Activated naive CD4-positive, alpha-beta T cell treated with anti-CD3 and anti-CD28 coated beads for 36 hours (primary cell): ENCODE measurements at regions of chr2 and their contacts with region 1.

Region 1: DNA sequence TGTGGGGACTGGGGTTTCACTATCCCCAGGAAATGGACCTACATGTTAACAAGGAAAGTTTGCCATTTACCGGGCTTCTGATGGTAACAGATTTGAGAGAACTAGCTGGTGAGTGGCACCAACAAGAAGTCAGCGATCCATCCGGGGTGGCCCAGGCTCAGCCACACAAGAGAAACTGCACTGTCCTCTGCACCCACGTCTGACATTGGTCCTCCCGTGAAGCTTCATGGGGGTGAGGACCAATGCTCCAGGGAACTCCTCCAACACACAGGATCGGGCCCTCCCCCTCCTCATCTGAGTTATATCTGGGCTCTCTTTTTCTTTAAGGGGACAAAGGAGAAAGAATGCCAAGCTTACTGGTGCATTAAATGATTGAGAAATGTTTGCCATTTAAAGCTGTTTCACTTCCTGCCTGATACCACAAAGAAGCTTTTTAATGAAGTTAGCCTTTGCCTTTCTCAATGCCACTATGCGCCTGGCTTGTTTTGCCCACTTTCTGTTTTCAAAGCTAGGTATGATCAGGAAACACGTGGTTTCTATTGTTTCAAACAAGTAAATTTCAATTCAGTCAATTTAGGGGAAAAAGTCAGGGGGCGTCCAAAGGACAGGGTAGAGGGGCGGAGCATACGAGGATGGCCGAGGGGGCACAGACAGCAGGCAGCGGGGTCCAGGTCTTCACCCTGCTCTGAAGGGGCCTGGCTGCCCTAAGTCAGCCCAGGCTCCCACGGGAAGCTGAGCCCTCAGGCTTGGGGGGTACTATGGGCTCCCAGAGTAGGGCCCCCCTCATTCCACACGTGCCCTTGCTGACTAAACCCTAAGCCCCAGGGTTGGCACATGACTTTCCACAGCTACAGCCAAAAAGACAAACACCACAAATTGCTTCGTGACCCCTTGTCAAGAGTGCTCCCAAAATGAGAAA is 204.0 kb upstream of the ID2 start:
- DNase-seq: peak; percentile 54
- H3K4me3 Mint-ChIP-seq: no peak overlapping the region
- H3K27ac Mint-ChIP-seq: peak overlapping the region; percentile 31
- H3K4me1 Mint-ChIP-seq: peaks cover 65% of the 10 kb centered on the region
- H3K27me3 Mint-ChIP-seq: no peaks in the 10 kb centered on the region

Region 2: GRCh38 chr2:8154936-8155335 is 322.9 kb before region 1 on chr2:
- CTCF ChIA-PET with region 1: no interaction called
- intact Hi-C with region 1: loop called (anchors 1 kb)
- DNase-seq: peak; percentile 68
- H3K4me3 Mint-ChIP-seq: no peak overlapping the region
- H3K27ac Mint-ChIP-seq: peak overlapping the region; percentile 78
- H3K4me1 Mint-ChIP-seq: peaks cover 16% of the 10 kb centered on the region
- H3K27me3 Mint-ChIP-seq: no peaks in the 10 kb centered on the region

Region 3: GRCh38 chr2:8303322-8303832 is 174.4 kb before region 1 on chr2:
- CTCF ChIA-PET with region 1: no interaction called
- intact Hi-C with region 1: loop called (anchors 5 kb)
- DNase-seq: peak; percentile 69
- H3K4me3 Mint-ChIP-seq: no peak overlapping the region
- H3K27ac Mint-ChIP-seq: no peak overlapping the region
- H3K4me1 Mint-ChIP-seq: peaks cover 39% of the 10 kb centered on the region
- H3K27me3 Mint-ChIP-seq: peaks cover 5% of the 10 kb centered on the region

Region 4: DNA sequence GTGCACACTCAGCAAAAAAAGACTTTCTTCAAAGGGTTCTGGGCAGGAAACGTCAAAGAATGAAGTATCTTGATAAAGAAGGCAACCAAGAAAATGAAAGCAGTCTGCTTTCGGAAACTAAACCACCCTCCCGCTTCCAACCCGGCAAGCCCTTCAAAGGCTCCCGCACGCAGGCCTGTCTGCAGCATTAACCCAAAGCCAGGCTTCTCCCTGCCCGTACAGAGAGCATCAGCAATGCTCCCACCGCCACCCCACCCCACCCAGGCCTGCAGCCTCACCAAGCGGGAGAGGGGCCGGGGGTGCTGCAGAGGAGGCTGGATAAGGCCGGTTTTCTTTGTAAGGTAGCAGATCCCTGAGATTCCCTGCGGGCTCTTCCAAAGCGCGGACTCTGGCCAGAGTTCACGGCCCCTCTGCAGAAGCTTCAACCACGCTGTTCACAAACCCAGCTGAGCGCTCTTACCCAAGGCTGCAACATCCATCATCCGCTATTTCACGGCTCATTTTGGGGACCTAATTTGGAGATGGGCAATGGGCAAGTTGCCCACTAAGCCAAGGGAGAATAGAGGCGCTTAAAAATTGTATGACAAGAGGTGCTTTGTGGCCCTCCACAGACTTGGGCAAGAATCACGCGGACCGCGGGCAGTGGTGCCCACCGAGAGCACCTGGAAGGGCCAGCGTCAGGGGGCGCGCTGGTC is 21.5 kb before region 1 on chr2:
- CTCF ChIA-PET with region 1: no interaction called
- intact Hi-C with region 1: loop called (anchors 1 kb)
- DNase-seq: peak; percentile 71
- H3K4me3 Mint-ChIP-seq: peak overlapping the region; percentile 51
- H3K27ac Mint-ChIP-seq: no peak overlapping the region
- H3K4me1 Mint-ChIP-seq: peaks cover 18% of the 10 kb centered on the region
- H3K27me3 Mint-ChIP-seq: peaks cover 18% of the 10 kb centered on the region

Region 5: DNA sequence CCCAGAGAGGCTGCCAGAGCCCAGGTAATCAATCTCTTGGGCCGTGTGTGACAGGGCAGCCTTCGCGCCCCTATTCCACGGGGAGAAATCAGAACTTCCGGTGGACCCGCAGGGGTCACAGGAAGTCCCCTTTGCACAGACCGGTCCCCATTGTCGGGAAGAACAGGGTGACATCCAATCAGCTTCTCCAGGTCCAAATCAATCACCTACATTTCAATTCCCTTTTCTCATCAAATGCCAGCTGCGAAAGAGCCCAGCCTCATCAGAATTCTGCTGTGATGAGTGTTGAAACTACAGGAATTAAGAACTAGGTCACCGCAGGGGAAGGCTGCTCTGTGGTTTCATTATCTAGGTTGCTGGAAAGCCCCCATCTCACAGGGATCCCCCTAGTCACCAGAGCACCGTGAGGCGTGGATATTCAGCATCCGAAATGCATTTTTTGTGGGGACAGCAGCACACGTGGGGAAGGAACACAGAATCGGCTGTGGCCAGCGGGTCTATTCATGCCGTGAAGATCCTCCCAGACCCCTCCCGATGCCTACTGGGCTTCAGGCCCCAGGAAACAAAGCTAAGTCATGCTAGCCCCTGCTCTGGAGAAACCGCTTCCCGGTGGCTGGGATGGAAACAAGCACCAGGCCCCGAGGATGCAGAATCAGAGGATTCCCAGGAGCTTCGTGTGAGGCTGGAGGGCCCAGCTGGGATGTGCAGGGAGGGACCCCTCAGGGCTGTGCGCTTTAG is 10.4 kb after region 1 on chr2:
- CTCF ChIA-PET with region 1: interaction called, 7 read pairs
- intact Hi-C with region 1: loop called (anchors 1 kb)
- DNase-seq: peak; percentile 86
- H3K4me3 Mint-ChIP-seq: peak overlapping the region; percentile 59
- H3K27ac Mint-ChIP-seq: peak overlapping the region; percentile 61
- H3K4me1 Mint-ChIP-seq: peaks cover 30% of the 10 kb centered on the region
- H3K27me3 Mint-ChIP-seq: no peaks in the 10 kb centered on the region